Endothelial cell of umbilical vein (primary cell): ENCODE measurements at regions of chr3 and their contacts with region 1.

Region 1: GRCh38 chr3:156705761-156706631 is 31.6 kb downstream of the TIPARP start:
- DNase-seq: no peak
- H3K4me3 ChIP-seq: no peak overlapping the region
- H3K27ac ChIP-seq: no peak overlapping the region
- H3K4me1 ChIP-seq: no peaks in the 10 kb centered on the region
- H3K27me3 ChIP-seq: no peaks in the 10 kb centered on the region
- CTCF ChIP-seq: no peak
- POLR2A ChIP-seq: no peak

Region 2: DNA sequence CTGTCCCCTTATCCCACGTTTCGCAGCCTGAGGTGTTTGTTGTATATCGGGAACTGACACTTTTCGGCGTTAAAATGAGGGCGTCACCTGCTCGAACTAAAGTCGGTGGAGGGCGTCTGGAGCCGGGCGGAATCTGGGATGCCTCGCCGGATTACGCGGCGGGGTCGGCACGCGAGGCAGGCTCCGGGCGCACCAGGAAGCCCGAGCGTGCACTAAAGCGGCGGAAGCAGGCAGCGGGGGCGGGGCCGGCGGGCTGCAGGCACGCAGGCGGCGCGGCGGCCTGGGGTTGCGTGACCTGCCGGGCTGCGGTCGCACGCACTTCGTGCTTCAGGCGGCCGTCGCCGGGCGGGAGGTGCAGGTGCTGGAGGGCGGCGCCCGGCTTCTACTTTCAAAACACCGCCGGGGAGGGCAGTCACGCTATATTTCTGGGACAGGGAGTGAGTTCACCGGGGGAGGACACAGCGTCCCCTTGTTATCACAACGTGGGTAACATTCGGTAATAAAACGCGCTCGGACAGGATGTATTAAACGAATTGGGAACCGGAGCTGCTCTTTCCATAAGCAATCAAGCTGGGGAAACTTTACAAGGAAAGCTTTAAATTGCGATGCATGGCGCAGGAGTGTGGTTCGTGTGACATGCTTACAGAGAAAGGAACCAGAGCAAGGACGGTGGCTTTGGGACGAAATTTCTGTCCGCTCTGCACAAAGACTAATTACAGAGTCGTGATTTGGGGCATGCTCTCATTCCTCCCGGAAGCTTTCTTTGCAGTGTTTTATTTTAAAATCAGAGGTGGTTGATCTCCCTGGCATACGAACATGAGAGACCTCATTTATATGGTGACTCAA is 111.0 kb after region 1 on chr3:
- CTCF ChIA-PET with region 1: no interaction called
- POLR2A ChIA-PET with region 1: no interaction called
- dilution Hi-C with region 1: loop called (anchors 25 kb)
- intact Hi-C with region 1: no loop called
- DNase-seq: peak; percentile 86
- H3K4me3 ChIP-seq: peak overlapping the region in 2 of 3 experiments; percentile 37
- H3K27ac ChIP-seq: peak overlapping the region; percentile 91
- H3K4me1 ChIP-seq: peaks cover 56% of the 10 kb centered on the region
- H3K27me3 ChIP-seq: no peaks in the 10 kb centered on the region
- CTCF ChIP-seq: no peak
- POLR2A ChIP-seq: no peak